A673 (cell line): ENCODE measurements at regions of chr6 and their contacts with region 1.

Region 1: GRCh38 chr6:132830334-132830751 is 16.0 kb downstream of the RPS12 start:
- DNase-seq: peak; percentile 64
- H3K4me3 ChIP-seq: no peak overlapping the region
- H3K27ac ChIP-seq: no peak overlapping the region
- H3K4me1 ChIP-seq: no peaks in the 10 kb centered on the region
- H3K27me3 ChIP-seq: no peaks in the 10 kb centered on the region
- CTCF ChIP-seq: peak; percentile 66

Region 2: DNA sequence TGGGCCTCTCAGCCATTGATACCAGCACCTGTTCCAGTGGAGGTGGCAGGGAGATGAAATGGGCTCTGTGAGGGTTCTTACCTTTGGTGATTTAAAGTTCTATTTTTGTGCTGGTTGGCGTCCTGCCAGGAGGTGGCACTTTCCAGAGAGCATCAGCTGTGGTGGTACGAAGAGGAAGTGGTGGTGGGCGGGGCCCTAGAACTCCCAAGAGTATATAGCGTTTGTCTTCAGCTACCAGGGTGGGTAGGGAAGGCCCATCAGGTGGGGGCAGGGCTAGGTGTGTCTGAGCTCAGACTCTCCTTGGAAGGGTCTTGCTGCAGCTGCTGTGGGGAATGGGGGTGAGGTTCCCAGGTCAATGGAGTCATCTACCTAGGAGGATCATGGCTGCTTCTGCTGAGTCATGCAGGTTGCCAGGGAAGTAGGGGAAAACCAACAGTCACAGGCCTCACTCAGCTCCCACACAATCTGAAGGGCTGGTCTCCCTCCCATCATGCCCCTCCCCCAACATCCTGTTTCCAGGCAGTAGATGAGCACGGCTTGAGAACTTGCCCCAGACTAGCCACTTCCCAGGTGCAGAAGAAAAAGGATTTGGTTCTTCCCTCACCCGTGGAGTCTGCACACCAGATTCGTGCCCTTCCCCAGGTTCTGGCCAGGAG is 475.7 kb before region 1 on chr6:
- CTCF ChIA-PET with region 1: no interaction called
- POLR2A ChIA-PET with region 1: no interaction called
- intact Hi-C with region 1: no loop called
- DNase-seq: no peak
- H3K4me3 ChIP-seq: no peak overlapping the region
- H3K27ac ChIP-seq: no peak overlapping the region
- H3K4me1 ChIP-seq: no peaks in the 10 kb centered on the region
- H3K27me3 ChIP-seq: peaks cover 76% of the 10 kb centered on the region
- CTCF ChIP-seq: no peak

Region 3: DNA sequence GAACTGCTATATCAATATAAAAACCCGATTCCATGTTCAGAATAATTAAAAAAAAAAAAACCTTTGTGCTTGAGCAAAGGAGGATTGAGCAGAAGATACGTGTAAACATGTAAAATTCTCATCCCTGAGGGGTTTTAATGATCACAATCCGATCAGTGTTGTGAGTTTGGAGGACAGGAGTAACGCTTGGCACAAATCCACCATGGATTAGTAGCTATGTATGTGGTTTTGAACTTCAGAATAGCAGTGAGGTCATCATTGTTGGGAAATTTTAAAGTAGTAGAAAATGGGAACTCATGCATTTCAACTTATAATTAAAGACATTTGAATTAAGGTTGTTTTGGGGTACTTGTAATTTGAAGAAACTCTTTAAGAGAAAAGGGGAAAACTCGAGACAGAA is 187.2 kb after region 1 on chr6:
- CTCF ChIA-PET with region 1: no interaction called
- POLR2A ChIA-PET with region 1: no interaction called
- intact Hi-C with region 1: no loop called
- DNase-seq: no peak
- H3K4me3 ChIP-seq: no peak overlapping the region
- H3K27ac ChIP-seq: no peak overlapping the region
- H3K4me1 ChIP-seq: no peaks in the 10 kb centered on the region
- H3K27me3 ChIP-seq: no peaks in the 10 kb centered on the region
- CTCF ChIP-seq: no peak

Region 4: GRCh38 chr6:133553652-133554051 is 723.3 kb after region 1 on chr6:
- CTCF ChIA-PET with region 1: no interaction called
- POLR2A ChIA-PET with region 1: no interaction called
- intact Hi-C with region 1: loop called (anchors 2 kb)
- DNase-seq: peak; percentile 64
- H3K4me3 ChIP-seq: no peak overlapping the region
- H3K27ac ChIP-seq: no peak overlapping the region
- H3K4me1 ChIP-seq: no peaks in the 10 kb centered on the region
- H3K27me3 ChIP-seq: no peaks in the 10 kb centered on the region
- CTCF ChIP-seq: peak; percentile 69